HepG2 (cell line): ENCODE measurements at regions of chr4 and their contacts with region 1.

Region 1: GRCh38 chr4:17817020-17817419 is 6.2 kb downstream of the NCAPG start:
- DNase-seq: peak; percentile 29
- ATAC-seq: peak; percentile 65
- H3K4me3 ChIP-seq: no peak overlapping the region
- H3K27ac ChIP-seq: no peak overlapping the region
- H3K4me1 ChIP-seq: peaks cover 18% of the 10 kb centered on the region
- H3K27me3 ChIP-seq: no peaks in the 10 kb centered on the region; a peak in 1 of 5 replicates
- CTCF ChIP-seq: peak; percentile 55
- EP300 ChIP-seq: no peak
- POLR2A ChIP-seq: no peak
- RAD21 ChIP-seq: no peak

Region 2: GRCh38 chr4:17889692-17890091 is 72.7 kb after region 1 on chr4:
- CTCF ChIA-PET with region 1: no interaction called
- POLR2A ChIA-PET with region 1: no interaction called
- in situ Hi-C with region 1: no loop called
- intact Hi-C with region 1: no loop called
- DNase-seq: no peak
- ATAC-seq: no peak
- H3K4me3 ChIP-seq: no peak overlapping the region
- H3K27ac ChIP-seq: no peak overlapping the region
- H3K4me1 ChIP-seq: no peaks in the 10 kb centered on the region
- H3K27me3 ChIP-seq: no peaks in the 10 kb centered on the region
- CTCF ChIP-seq: no peak
- EP300 ChIP-seq: no peak
- POLR2A ChIP-seq: no peak
- RAD21 ChIP-seq: no peak

Region 3: GRCh38 chr4:18366892-18367291 is 549.9 kb after region 1 on chr4:
- CTCF ChIA-PET with region 1: interaction called, 16 read pairs
- POLR2A ChIA-PET with region 1: no interaction called
- in situ Hi-C with region 1: loop called (anchors 10 kb)
- intact Hi-C with region 1: loop called (anchors 1 kb)
- DNase-seq: peak; percentile 24
- ATAC-seq: peak; percentile 97
- H3K4me3 ChIP-seq: no peak overlapping the region
- H3K27ac ChIP-seq: no peak overlapping the region
- H3K4me1 ChIP-seq: no peaks in the 10 kb centered on the region
- H3K27me3 ChIP-seq: no peaks in the 10 kb centered on the region
- CTCF ChIP-seq: peak; percentile 78
- EP300 ChIP-seq: no peak
- POLR2A ChIP-seq: no peak
- RAD21 ChIP-seq: 0 out of 2 replicates have a peak, but pooled peaks have one; percentile 40

Region 4: GRCh38 chr4:18568600-18568999 is 751.6 kb after region 1 on chr4:
- CTCF ChIA-PET with region 1: no interaction called
- POLR2A ChIA-PET with region 1: no interaction called
- in situ Hi-C with region 1: no loop called
- intact Hi-C with region 1: loop called (anchors 1 kb)
- DNase-seq: no peak
- ATAC-seq: no peak
- H3K4me3 ChIP-seq: no peak overlapping the region
- H3K27ac ChIP-seq: no peak overlapping the region
- H3K4me1 ChIP-seq: peaks cover 66% of the 10 kb centered on the region
- H3K27me3 ChIP-seq: no peaks in the 10 kb centered on the region
- CTCF ChIP-seq: peak; percentile 45
- EP300 ChIP-seq: no peak
- POLR2A ChIP-seq: no peak
- RAD21 ChIP-seq: no peak

Region 5: GRCh38 chr4:18593445-18594002 is 776.5 kb after region 1 on chr4:
- CTCF ChIA-PET with region 1: interaction called, 5 read pairs
- POLR2A ChIA-PET with region 1: no interaction called
- in situ Hi-C with region 1: loop called (anchors 5 kb)
- intact Hi-C with region 1: loop called (anchors 1 kb)
- DNase-seq: peak; percentile 66
- ATAC-seq: peak; percentile 85
- H3K4me3 ChIP-seq: no peak overlapping the region
- H3K27ac ChIP-seq: no peak overlapping the region
- H3K4me1 ChIP-seq: peaks cover 11% of the 10 kb centered on the region; the same call in 1 of the 2 replicates
- H3K27me3 ChIP-seq: peaks cover 0 to 5% of the 10 kb centered on the region in 2 experiments; a peak in 1 of 5 replicates
- CTCF ChIP-seq: peak; percentile 85
- EP300 ChIP-seq: no peak
- POLR2A ChIP-seq: no peak
- RAD21 ChIP-seq: peak; percentile 83